ENCODE measurements at regions of chr14 and their contacts with region 1.

Region 1: GRCh38 chr14:35134328-35135123 is 12.2 kb downstream of the PRORP start:
- DNase-seq: no peak
- H3K4me3 Mint-ChIP-seq: no peak overlapping the region
- H3K27ac Mint-ChIP-seq: no peak overlapping the region
- H3K4me1 Mint-ChIP-seq: peaks cover 15% of the 10 kb centered on the region
- H3K27me3 Mint-ChIP-seq: no peaks in the 10 kb centered on the region

Region 2: DNA sequence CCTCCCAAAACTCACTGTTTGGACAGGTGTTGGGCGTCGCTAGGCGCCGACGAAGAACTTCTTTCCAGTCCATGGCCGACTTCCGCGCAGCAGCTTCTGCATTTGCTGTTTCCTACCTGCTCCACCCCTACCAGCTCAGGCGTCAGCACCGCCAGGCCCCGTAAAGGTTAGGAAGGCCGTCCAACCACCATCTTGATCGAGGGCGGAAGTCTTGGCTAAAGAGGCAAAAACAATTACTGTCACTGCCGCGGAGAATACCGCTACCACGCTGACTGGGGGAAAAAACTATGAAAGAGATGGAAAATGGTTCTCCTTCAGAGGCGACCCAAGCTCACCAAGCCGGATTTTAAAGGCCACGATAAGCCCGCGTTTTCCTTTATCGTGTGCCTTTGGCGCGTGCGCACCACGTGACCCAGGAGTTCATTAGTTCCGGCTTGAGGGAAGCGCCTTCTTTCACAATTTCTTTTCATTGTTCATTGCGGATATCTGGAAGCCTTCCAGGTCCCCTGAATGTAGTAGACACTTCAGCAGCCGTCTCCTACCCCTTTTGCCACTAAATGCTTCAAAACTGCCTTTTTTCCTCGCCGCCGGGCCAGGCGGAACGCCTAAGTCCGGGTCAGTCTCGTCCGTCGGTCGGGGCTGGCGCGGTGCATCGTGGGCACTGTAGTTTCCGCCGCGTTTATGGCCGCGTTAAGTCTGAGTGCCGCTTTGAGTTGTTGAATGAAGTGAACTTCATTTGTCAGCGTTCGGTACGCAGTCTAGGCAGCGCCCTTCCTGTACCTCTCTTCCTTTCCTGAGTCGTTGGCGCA is 12.4 kb before region 1 on chr14 and contains the starts of genes PPP2R3C and PRORP:
- CTCF ChIA-PET with region 1: no interaction called
- POLR2A ChIA-PET with region 1: interaction called, 12 read pairs
- DNase-seq: peak; percentile 92
- H3K4me3 Mint-ChIP-seq: peak within 1 kb of the TSS; percentile 91
- H3K27ac Mint-ChIP-seq: peak within 1 kb of the TSS; percentile 98
- H3K4me1 Mint-ChIP-seq: peaks cover 59% of the 10 kb centered on the region
- H3K27me3 Mint-ChIP-seq: no peaks in the 10 kb centered on the region
- total RNA-seq, gene PPP2R3C: 51.7 to 59.4 TPM
- total RNA-seq, gene PRORP: 43.3 to 44.9 TPM

Measured in activated CD4-positive, alpha-beta memory T cell treated with anti-CD3 and anti-CD28 coated beads, Interleukin-2, amount 10 ng/mL, durations not matched to agents 7 days and 5 days (primary cell).